Activated CD4-positive, alpha-beta T cell treated with anti-CD3 and anti-CD28 coated beads, Interleukin-2, amount 10 ng/mL, durations not matched to agents 24 days and 14 days (primary cell): ENCODE measurements at regions of chr2 and their contacts with region 1.

Region 1: GRCh38 chr2:136117909-136118818 is at the start of gene CXCR4:
- DNase-seq: peak; percentile 97
- H3K4me3 Mint-ChIP-seq: peak within 1 kb of the TSS; percentile 98
- H3K27ac Mint-ChIP-seq: peak within 1 kb of the TSS; percentile 95
- H3K4me1 Mint-ChIP-seq: peaks cover 63% of the 10 kb centered on the region
- H3K27me3 Mint-ChIP-seq: peaks cover 35% of the 10 kb centered on the region
- total RNA-seq, gene CXCR4: 88.8 and 92.7 TPM in 2 replicates

Region 2: DNA sequence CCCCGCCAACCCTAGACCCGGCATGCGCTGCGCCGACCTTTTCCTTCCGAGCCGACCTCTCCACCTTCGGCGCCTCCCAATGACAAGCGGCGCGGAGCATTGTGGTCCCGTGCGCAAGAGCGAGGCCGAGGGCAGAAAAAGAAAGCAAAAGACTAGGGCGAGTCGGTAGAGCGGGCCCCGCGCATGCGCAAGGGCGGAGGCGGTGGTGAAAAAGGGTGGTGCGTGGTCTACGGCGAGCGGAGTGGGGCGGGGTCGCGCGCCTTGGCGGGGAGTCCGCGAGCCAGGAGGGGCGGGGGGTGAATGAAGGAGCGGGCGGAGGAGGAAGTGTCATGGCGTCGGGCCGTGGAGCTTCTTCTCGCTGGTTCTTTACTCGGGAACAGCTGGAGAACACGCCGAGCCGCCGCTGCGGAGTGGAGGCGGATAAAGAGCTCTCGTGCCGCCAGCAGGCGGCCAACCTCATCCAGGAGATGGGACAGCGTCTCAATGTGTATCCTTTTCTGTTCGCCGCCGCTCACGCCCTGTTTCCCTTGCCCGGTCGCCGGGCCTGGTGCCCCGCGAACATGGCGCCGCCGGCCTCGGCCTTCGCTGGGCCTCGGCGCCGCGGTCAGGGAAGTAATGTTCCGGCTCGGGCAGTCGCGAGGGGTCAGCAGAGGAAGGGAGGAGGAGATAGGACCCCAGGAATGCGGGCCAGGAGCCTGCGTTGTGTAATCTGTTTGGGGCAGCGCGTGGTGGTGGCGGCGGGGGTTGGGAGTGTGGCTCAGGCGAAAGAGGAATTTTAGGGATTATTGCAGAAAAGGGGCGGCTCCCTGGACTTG is 1199.4 kb before region 1 on chr2 and contains the start of gene CCNT2:
- intact Hi-C with region 1: loop called (anchors 5 kb)
- DNase-seq: peak; percentile 100
- H3K4me3 Mint-ChIP-seq: peak within 1 kb of the TSS; percentile 96
- H3K27ac Mint-ChIP-seq: peak within 1 kb of the TSS; percentile 97
- H3K4me1 Mint-ChIP-seq: peaks cover 23% of the 10 kb centered on the region
- H3K27me3 Mint-ChIP-seq: peaks cover 6% of the 10 kb centered on the region
- total RNA-seq, gene CCNT2: 46.0 and 48.5 TPM in 2 replicates

Region 3: DNA sequence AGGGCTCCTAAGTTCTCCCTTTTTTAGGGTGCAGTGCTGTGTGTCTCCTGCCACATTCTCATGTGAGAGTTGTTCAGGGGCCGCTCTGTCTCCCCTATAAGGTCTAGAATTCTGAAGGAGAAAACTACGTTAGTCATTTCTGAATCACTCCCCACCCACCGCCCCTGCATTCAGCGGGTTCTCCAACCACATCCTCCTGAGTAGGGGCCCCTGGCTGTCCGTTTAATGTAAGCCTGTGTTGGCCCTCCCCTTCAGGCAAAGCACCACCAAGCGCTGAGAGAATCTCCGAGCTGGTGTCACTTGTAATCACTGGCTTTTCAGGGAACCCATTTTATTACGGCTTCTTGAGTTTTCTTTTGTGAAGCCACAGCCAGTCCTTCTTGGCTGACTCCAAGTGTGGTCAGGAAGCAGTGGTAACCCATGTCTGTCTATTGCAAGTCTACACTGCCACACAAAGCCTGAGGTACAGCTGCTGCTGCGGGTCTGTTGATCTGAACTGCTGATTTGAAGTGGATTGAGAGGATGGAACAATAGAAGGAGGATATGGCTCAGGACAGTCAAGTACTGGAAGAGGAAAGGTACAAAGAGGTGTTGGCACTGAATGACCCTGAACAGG is 298.1 kb before region 1 on chr2:
- intact Hi-C with region 1: loop called (anchors 5 kb)
- DNase-seq: peak; percentile 93
- H3K4me3 Mint-ChIP-seq: peak overlapping the region; percentile 74
- H3K27ac Mint-ChIP-seq: peak overlapping the region; percentile 83
- H3K4me1 Mint-ChIP-seq: peaks cover 44% of the 10 kb centered on the region
- H3K27me3 Mint-ChIP-seq: no peaks in the 10 kb centered on the region

Region 4: DNA sequence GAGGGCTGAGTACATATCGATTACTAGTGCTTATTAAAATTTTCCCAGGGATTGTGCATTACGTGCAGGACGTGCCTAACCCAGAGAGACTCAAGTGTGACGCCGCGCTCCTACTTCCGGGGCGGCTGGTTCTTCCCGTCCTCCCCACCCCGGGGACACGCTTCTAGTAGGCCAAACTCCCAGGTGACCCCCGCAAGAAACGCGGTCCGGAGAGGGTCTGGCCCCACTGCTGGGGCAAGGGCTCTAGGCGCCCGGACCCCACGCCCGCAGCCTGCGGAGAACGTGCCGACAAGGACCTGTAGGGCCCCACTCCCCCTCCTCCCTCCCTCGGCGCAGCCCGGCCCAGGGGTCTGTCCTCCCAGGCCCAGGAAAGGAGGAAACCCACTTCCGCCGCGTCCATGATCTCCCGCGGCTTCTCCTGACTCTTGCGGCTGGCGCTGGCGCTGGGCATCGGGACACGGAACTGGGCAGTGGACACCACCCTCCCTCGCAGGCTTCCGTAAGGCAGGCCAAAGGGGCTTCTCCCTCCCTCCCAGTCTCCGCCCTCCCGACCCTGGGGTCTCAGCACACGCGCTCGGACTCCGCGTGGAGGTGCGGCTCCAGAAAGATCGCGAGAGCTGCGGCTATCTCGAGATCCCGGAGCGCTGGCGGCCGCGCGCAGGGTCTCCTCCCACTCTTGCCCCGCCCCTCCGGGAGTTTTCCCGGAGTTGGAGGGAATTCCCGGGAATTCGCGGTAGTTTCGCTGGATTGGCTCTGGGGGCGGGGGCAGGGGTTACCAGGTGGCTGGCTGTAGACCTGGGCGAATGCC is 132.9 kb before region 1 on chr2 and contains the start of gene DARS1:
- intact Hi-C with region 1: loop called (anchors 1 kb)
- DNase-seq: peak; percentile 95
- H3K4me3 Mint-ChIP-seq: peak within 1 kb of the TSS; percentile 93
- H3K27ac Mint-ChIP-seq: peak within 1 kb of the TSS; percentile 100
- H3K4me1 Mint-ChIP-seq: peaks cover 48% of the 10 kb centered on the region
- H3K27me3 Mint-ChIP-seq: no peaks in the 10 kb centered on the region
- total RNA-seq, gene DARS1: 153 and 160 TPM in 2 replicates

Region 5: GRCh38 chr2:136086253-136087016 is 31.7 kb before region 1 on chr2:
- intact Hi-C with region 1: no loop called
- DNase-seq: no peak
- H3K4me3 Mint-ChIP-seq: no peak overlapping the region
- H3K27ac Mint-ChIP-seq: no peak overlapping the region
- H3K4me1 Mint-ChIP-seq: peaks cover 9% of the 10 kb centered on the region
- H3K27me3 Mint-ChIP-seq: no peaks in the 10 kb centered on the region

Region 6: GRCh38 chr2:136207030-136207623 is 89.0 kb after region 1 on chr2:
- intact Hi-C with region 1: loop called (anchors 2 kb)
- DNase-seq: peak; percentile 60
- H3K4me3 Mint-ChIP-seq: peak overlapping the region; percentile 8
- H3K27ac Mint-ChIP-seq: peak overlapping the region; percentile 92
- H3K4me1 Mint-ChIP-seq: peaks cover 23% of the 10 kb centered on the region
- H3K27me3 Mint-ChIP-seq: peaks cover 4% of the 10 kb centered on the region

Region 7: DNA sequence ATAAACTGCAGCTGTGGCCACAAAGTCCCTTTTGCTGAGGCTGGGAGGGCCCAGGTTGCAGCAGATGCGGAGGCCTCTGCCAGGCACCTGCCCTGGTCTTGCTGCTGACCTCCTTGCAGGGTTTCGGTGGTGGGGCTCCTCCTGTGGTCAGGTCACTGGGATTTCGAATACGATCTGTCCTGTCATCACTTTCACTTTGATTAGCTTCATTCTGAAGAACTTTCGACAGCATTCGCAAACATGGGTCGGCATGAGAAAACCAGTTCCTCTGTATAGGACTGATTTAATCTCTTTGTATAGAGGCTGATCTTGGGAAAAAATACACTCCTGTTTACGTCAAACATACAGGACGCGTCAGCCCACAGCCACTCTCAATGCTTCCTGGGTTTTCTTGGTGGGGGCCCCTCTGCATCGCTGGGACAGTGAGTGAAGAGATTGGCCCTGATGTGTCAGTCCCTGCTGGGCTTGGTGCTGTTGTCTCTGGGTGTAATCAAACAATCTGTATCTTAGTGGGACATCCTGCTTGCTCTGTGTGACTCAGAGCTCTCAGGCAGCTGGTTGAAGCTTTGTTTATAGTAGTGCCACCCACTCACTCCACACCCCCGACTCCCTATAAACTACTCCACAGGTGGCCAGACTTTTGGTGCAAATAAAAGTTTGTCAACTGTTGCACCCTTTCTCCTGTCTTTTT is 209.1 kb after region 1 on chr2:
- intact Hi-C with region 1: loop called (anchors 1 kb)
- DNase-seq: peak; percentile 91
- H3K4me3 Mint-ChIP-seq: peak overlapping the region; percentile 74
- H3K27ac Mint-ChIP-seq: peak overlapping the region; percentile 92
- H3K4me1 Mint-ChIP-seq: peaks cover 49% of the 10 kb centered on the region
- H3K27me3 Mint-ChIP-seq: no peaks in the 10 kb centered on the region